GM10248 (cell line): ENCODE measurements at regions of chr10 and their contacts with region 1.

Region 1: DNA sequence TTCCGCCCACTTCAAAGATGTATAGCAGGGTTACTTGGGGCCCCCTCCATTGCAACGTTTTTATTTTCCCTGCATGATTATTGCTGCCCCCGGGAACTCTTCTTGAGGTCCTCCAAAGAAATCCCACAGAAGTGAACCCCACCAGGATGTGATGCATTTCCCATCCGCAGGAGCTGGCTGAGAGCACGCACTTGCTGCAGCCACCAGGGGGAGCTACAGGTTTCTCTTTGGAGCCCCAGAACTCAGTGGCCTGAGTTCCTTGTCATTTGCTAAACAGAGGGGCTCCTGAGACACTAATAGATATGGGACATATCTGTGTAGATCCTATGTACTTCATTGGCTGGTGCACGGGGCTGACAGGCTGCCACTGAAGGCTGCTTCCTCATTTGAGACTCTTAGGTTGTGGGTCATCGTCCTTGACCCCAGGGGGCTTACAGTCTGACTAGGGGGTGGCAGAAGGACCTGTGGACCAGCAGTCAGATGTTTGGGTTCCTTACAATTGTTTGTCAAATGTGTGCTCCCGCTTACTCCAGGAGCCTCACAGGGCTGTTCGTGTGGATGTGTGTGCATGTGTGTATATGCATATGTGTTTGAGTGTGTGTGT is 52.3 kb upstream of the ENO4 start:
- DNase-seq: peak; percentile 78
- CTCF ChIP-seq: peak; percentile 87

Region 2: GRCh38 chr10:116809483-116810119 is 12.6 kb after region 1 on chr10:
- CTCF ChIA-PET with region 1: interaction called, 10 read pairs
- POLR2A ChIA-PET with region 1: no interaction called
- DNase-seq: no peak
- CTCF ChIP-seq: peak; percentile 5

Region 3: GRCh38 chr10:117167789-117168674 is 371.0 kb after region 1 on chr10:
- CTCF ChIA-PET with region 1: interaction called, 183 read pairs
- POLR2A ChIA-PET with region 1: no interaction called
- DNase-seq: peak; percentile 85
- CTCF ChIP-seq: peak; percentile 75